Heart left ventricle (tissue), 16 donors: ENCODE measurements at regions of chr1 and their contacts with region 1.

Region 1: DNA sequence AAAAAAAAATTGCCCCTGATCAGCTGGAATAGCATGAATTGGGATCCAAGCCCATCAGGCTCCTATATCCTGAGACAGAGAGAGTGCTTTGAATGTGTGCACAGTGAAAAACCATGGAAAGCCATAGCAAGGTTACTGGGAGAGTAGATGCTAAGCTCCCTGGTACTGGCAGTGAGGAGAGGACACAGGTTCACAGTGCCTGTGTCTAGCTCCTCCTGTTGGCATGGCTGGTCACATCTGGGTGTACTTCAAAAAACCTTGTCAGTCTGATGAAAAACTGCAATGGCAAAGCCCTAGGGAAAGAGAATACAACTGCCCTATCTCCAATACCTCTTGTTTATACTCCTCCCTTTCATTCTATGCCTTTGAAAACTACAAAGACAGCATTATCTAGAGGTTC is 12.9 kb downstream of the COPA start:
- DNase-seq: no peak
- ATAC-seq: no peak
- H3K4me3 ChIP-seq: no peak overlapping the region
- H3K27ac ChIP-seq: no peak overlapping the region
- H3K4me1 ChIP-seq: no peaks in the 10 kb centered on the region
- H3K27me3 ChIP-seq: no peaks in the 10 kb centered on the region
- CTCF ChIP-seq: no peak
- POLR2A ChIP-seq: no peak

Region 2: GRCh38 chr1:160277330-160277729 is 52.8 kb before region 1 on chr1:
- intact Hi-C with region 1: no loop called
- DNase-seq: no peak
- ATAC-seq: no peak
- H3K4me3 ChIP-seq: no peak overlapping the region
- H3K27ac ChIP-seq: no peak overlapping the region
- H3K4me1 ChIP-seq: peaks cover 0 to 9% (median 0%) of the 10 kb centered on the region in 12 donors
- H3K27me3 ChIP-seq: no peaks in the 10 kb centered on the region
- CTCF ChIP-seq: no peak
- POLR2A ChIP-seq: no peak

Region 3: GRCh38 chr1:160291248-160292220 is 38.6 kb before region 1 on chr1:
- intact Hi-C with region 1: loop called in 1 of 10 experiments (anchors 5 kb)
- DNase-seq: peak in 4 of 5 donors; percentile 44 to 60 (median 53)
- ATAC-seq: peak; percentile 73 to 90 (median 82)
- H3K4me3 ChIP-seq: no peak overlapping the region
- H3K27ac ChIP-seq: peak overlapping the region in 1 of 12 donors; percentile 32
- H3K4me1 ChIP-seq: peaks cover 0 to 5% (median 0%) of the 10 kb centered on the region in 12 donors
- H3K27me3 ChIP-seq: no peaks in the 10 kb centered on the region
- CTCF ChIP-seq: peak; percentile 62 to 86 (median 78)
- POLR2A ChIP-seq: no peak